Thyroid gland (tissue), 4 donors: ENCODE measurements at regions of chr9 and their contacts with region 1.

Region 1: GRCh38 chr9:124852829-124853531 is at the start of gene WDR38:
- DNase-seq: peak; percentile 91 to 92
- H3K4me3 ChIP-seq: peak within 1 kb of the TSS in 1 of 3 donors; percentile 35
- H3K27ac ChIP-seq: peak within 1 kb of the TSS; percentile 53 to 75 (median 67)
- H3K4me1 ChIP-seq: peaks cover 12 to 24% of the 10 kb centered on the region in 2 donors
- H3K27me3 ChIP-seq: no peaks in the 10 kb centered on the region
- CTCF ChIP-seq: peak; percentile 97 to 100 (median 99)
- POLR2A ChIP-seq: no peak
- total RNA-seq, gene WDR38: 0.33 to 1.5 (median 0.79) TPM in 3 of 4 donors, not detected in the other

Region 2: DNA sequence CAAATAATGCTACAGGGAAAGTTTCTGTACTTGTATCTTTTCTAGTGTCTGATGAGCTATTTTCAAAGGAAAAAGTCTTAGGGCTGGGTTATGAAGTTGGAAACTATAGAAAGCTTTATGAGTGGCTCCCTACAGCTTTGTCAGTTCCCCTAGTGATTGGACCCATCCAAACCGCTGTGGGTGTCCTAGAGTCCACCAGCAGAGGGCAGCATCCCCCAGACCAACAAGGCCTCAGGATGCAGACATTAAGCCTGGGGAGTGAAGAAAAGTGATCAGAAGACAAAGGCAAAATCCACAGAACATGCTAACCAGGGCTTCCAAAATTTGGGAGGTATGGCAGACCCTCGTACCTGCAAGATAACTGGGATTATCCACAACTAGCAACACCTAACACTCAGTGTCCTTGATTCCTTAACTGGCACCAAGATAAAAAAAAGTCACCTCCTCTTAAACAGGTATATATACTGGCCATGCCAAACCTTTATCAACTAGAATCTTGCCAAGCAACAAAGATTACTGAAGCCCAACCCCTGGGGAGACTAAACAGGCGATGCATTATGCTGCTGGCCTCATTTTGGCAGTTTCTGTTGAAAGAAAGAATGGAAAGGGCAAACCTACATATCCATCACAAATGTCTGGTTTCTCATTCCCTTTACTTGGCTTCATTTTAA is 235.4 kb before region 1 on chr9:
- intact Hi-C with region 1: loop called (anchors 10 kb)
- DNase-seq: peak; percentile 81 to 86
- H3K4me3 ChIP-seq: no peak overlapping the region
- H3K27ac ChIP-seq: peak overlapping the region; percentile 14 to 51 (median 21)
- H3K4me1 ChIP-seq: peaks cover 19 to 37% of the 10 kb centered on the region in 2 donors
- H3K27me3 ChIP-seq: no peaks in the 10 kb centered on the region
- CTCF ChIP-seq: peak; percentile 72 to 93 (median 86)
- POLR2A ChIP-seq: no peak

Region 3: GRCh38 chr9:124771021-124771866 is 81.7 kb before region 1 on chr9 and contains the start of gene NR6A1:
- intact Hi-C with region 1: loop called (anchors 2 kb)
- DNase-seq: peak; percentile 98 to 99
- H3K4me3 ChIP-seq: peak within 1 kb of the TSS; percentile 46 to 72 (median 67)
- H3K27ac ChIP-seq: peak within 1 kb of the TSS; percentile 73 to 91 (median 86)
- H3K4me1 ChIP-seq: peaks cover 18 to 27% of the 10 kb centered on the region in 2 donors
- H3K27me3 ChIP-seq: no peaks in the 10 kb centered on the region
- CTCF ChIP-seq: peak in 3 of 6 experiments; percentile 26 to 38 (median 33)
- POLR2A ChIP-seq: peak; percentile 61 to 98
- total RNA-seq, gene NR6A1: 15.3 to 25.0 (median 19.3) TPM

Region 4: DNA sequence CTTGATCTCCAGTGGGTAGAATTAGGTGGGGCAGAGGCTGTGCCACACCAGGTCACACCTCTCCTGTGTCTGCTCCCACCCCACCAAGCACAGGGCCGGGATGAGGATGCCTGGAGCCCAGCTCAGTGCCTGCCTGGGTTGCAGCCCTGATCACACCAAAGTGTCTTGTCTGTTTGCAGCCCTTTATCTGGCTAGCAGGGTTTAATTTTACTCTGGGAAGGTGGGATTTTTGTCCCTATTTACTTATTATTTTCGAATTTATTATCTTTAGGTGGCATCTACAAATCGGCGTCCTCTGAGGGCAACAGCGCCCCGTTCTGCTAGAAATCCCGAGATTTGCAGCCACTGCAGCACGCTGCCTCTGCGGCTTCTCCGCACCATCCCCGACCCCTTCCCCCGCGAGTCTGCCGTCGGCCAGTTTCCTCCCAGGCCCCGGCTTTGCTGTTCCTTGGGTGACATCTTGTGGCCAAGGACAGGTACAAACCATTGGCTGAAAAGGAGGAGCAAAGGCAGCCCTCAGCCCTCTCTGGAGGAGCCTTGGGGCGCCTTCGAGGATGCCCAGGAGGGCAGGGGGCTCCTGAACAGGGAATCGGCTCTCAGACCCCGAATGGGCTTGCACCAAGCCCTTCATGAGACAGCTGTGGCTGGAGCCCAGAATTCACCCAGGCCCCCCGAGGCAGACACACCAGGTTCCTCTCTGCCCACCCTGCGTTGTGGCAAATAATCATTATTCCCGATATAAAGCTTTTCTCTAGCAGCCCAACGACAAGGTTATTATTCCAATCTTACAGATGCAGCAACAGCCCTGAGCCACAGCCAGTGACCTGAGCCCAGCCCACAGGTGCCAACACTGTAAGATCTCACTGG is 521.7 kb after region 1 on chr9:
- intact Hi-C with region 1: loop called (anchors 5 kb)
- DNase-seq: peak; percentile 55 to 67
- H3K4me3 ChIP-seq: no peak overlapping the region
- H3K27ac ChIP-seq: no peak overlapping the region
- H3K4me1 ChIP-seq: peaks cover 5 to 14% of the 10 kb centered on the region in 2 donors
- H3K27me3 ChIP-seq: no peaks in the 10 kb centered on the region
- CTCF ChIP-seq: peak; percentile 52 to 84 (median 76)
- POLR2A ChIP-seq: no peak